Activated CD4-positive, alpha-beta memory T cell treated with anti-CD3 and anti-CD28 coated beads, Interleukin-2, amount 10 ng/mL, durations not matched to agents 7 days and 5 days (primary cell): ENCODE measurements at regions of chr4 and their contacts with region 1.

Region 1: GRCh38 chr4:73446336-73446938 is 10.4 kb downstream of the AFP start:
- DNase-seq: no peak
- H3K4me3 Mint-ChIP-seq: no peak overlapping the region
- H3K27ac Mint-ChIP-seq: no peak overlapping the region
- H3K4me1 Mint-ChIP-seq: no peaks in the 10 kb centered on the region
- H3K27me3 Mint-ChIP-seq: peaks cover 5% of the 10 kb centered on the region

Region 2: DNA sequence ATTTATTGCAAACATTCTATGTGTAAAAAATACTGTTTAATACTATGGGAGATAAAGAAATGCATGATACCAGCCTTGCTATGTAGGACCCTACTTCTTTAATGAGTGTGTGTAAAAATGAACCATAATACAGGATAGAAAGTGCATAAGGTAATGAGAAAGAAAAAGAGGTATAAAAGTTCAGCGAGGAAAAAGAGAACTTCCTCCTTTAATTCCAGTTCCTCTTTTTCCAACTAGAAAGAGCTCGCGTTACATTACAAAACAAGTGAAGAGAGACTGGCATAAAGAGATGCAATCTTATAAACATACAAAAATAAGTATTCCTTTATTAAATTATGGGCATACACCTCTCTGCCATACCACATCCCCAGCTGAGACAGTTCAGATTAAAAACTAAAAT is 265.2 kb before region 1 on chr4:
- CTCF ChIA-PET with region 1: no interaction called
- POLR2A ChIA-PET with region 1: no interaction called
- DNase-seq: no peak
- H3K4me3 Mint-ChIP-seq: no peak overlapping the region
- H3K27ac Mint-ChIP-seq: no peak overlapping the region
- H3K4me1 Mint-ChIP-seq: peaks cover 5% of the 10 kb centered on the region
- H3K27me3 Mint-ChIP-seq: no peaks in the 10 kb centered on the region

Region 3: GRCh38 chr4:73341454-73341853 is 105.0 kb before region 1 on chr4:
- CTCF ChIA-PET with region 1: interaction called, 10 read pairs
- POLR2A ChIA-PET with region 1: no interaction called
- DNase-seq: no peak
- H3K4me3 Mint-ChIP-seq: no peak overlapping the region
- H3K27ac Mint-ChIP-seq: no peak overlapping the region
- H3K4me1 Mint-ChIP-seq: no peaks in the 10 kb centered on the region
- H3K27me3 Mint-ChIP-seq: peaks cover 7% of the 10 kb centered on the region

Region 4: GRCh38 chr4:73929278-73929677 is 482.8 kb after region 1 on chr4:
- CTCF ChIA-PET with region 1: no interaction called
- POLR2A ChIA-PET with region 1: no interaction called
- DNase-seq: no peak
- H3K4me3 Mint-ChIP-seq: no peak overlapping the region
- H3K27ac Mint-ChIP-seq: no peak overlapping the region
- H3K4me1 Mint-ChIP-seq: no peaks in the 10 kb centered on the region
- H3K27me3 Mint-ChIP-seq: no peaks in the 10 kb centered on the region